ENCODE measurements at regions of chr2 and their contacts with region 1.

Region 1: DNA sequence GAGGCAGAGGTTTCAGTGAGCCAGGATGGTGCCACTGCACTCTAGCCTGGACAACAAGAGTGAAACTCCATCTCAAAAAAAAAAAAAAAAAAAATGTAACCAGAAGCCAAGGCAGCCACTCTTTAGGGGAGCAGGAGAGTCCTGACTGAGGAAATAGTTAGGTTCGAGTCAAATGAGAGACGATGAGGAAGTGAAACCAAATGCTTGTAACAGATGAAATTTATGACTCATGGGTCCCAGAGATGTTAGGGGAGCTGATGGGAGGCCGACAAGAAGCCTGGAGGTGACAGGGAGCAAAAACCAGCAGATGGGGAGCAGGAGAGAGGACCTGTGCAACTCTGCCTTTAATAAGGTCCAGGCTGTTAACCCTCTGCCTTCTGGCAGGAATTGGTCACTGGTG is 756.1 kb upstream of the DDX18 start:
- DNase-seq: peak; percentile 7
- H3K4me3 Mint-ChIP-seq: no peak overlapping the region
- H3K27ac Mint-ChIP-seq: peak overlapping the region; percentile 34
- H3K4me1 Mint-ChIP-seq: peaks cover 26% of the 10 kb centered on the region
- H3K27me3 Mint-ChIP-seq: no peaks in the 10 kb centered on the region
- CTCF ChIP-seq: no peak

Region 2: GRCh38 chr2:117199511-117199910 is 141.1 kb after region 1 on chr2:
- CTCF ChIA-PET with region 1: no interaction called
- intact Hi-C with region 1: loop called (anchors 10 kb)
- DNase-seq: no peak
- H3K4me3 Mint-ChIP-seq: no peak overlapping the region
- H3K27ac Mint-ChIP-seq: peak overlapping the region; percentile 28
- H3K4me1 Mint-ChIP-seq: peaks cover 9% of the 10 kb centered on the region
- H3K27me3 Mint-ChIP-seq: no peaks in the 10 kb centered on the region
- CTCF ChIP-seq: no peak

Region 3: DNA sequence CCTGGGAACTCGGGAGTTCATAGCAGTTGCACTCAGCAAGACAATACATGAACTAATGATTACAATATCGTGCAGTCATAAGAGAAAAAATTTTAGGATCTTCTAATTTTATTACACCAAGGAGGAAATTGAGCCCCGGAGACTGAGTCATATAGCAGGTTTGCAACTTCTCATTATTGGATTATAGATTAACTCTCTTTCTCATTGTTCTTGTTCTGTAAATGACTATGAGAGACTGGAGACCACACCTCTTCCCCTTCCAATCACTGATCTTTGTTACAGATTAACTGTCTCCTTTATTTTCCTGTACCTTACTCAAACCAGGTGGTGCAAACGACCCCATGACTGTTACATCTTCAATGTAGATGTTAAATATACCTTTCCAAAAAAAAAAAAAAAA is 320.3 kb after region 1 on chr2:
- CTCF ChIA-PET with region 1: no interaction called
- intact Hi-C with region 1: loop called (anchors 10 kb)
- DNase-seq: peak; percentile 32
- H3K4me3 Mint-ChIP-seq: peak overlapping the region; percentile 37
- H3K27ac Mint-ChIP-seq: peak overlapping the region; percentile 72
- H3K4me1 Mint-ChIP-seq: peaks cover 35% of the 10 kb centered on the region
- H3K27me3 Mint-ChIP-seq: no peaks in the 10 kb centered on the region
- CTCF ChIP-seq: no peak

Measured in Calu3 (cell line).